Naive thymus-derived CD4-positive, alpha-beta T cell (primary cell): ENCODE measurements at regions of chr10 and their contacts with region 1.

Region 1: DNA sequence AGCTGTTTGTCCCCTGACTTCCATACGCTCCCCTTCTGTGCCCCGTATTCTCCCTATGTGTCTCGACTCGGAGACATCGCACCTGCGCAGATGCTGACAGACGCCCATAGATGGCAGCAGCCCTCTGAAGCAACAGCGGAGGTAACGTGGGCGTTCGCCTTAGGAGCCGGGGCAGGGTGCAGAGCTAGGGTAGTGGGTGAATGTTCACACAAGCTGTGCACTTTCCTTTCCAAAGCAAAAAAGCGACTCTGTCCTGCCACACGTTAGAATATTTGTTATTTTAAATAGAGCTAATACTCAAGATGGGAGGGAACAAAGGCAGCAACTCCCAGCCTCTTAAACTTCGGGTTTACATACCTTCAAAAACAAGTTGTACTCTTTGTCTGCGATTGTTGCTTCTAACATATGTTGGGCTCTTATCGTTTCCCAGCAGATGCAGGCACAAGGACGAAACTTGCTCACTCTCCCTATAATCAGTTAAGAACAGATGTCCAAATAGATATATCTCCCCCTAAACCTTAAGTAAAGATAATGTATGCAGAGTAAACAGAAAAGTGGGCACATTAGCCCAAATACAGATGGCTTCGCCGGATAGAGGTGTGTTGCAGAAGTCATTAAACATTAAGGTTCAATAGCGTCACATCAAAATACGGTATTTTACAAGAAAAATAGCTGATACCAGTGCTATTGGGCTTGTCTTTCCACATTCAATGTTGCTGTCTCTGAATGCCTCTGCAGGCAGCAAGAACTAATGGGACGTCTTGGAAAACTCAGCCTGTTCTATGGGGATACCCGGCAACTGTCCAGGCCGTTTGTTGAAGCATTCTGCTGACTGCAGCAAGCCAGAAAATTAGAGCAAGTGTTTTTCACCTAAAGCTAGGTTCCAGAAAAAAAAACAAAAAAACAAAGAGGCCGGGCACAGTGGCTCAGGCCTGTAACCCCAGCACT is 340.3 kb upstream of the PRKCQ start:
- DNase-seq: peak; percentile 47 to 74 (median 69)
- ATAC-seq: peak; percentile 97
- H3K4me3 ChIP-seq: no peak overlapping the region
- H3K4me3 Mint-ChIP-seq: peak overlapping the region in 7 of 10 donors; percentile 13 to 45 (median 26)
- H3K27ac ChIP-seq: no peak overlapping the region
- H3K27ac Mint-ChIP-seq: no peak overlapping the region
- H3K4me1 ChIP-seq: peaks cover 0 to 21% of the 10 kb centered on the region in 2 donors
- H3K4me1 Mint-ChIP-seq: peaks cover 0 to 25% (median 12%) of the 10 kb centered on the region in 7 donors
- H3K27me3 ChIP-seq: no peaks in the 10 kb centered on the region
- H3K27me3 Mint-ChIP-seq: peaks cover 0 to 14% (median 5%) of the 10 kb centered on the region in 5 donors

Region 2: DNA sequence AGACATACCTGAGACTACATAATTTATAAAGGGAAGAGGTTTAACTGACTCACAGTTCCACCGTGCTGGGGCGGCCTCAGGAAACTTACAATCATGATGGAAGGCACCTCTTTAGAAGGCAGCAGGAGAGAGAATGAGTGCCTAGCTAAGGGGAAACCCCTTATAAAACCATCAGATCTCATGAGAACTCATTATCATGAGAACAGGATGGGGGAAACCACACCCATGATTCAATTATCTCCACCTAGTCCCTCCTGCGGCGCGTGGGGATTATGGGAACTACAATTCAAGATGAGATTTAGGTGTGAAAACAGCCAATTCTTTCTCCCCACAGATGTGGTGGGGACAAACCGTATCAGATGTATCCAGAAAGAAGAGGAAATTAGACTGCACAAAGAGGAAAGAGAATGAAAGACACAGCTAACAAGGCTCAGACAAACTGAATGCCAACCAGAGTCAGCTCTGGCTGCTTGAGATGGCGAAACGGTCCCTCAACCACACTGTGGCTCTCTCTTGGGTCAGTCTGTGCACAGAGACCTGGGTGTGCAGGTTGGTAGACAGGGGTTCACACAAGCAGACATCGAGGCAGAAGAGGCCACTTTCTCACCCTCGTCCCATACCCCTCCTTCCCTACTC is 114.9 kb after region 1 on chr10:
- CTCF ChIA-PET with region 1: no interaction called
- POLR2A ChIA-PET with region 1: no interaction called
- intact Hi-C with region 1: loop called in 1 of 2 experiments (anchors 10 kb)
- DNase-seq: no peak
- ATAC-seq: peak; percentile 68
- H3K4me3 ChIP-seq: no peak overlapping the region
- H3K4me3 Mint-ChIP-seq: peak overlapping the region in 1 of 10 donors; percentile 30
- H3K27ac ChIP-seq: no peak overlapping the region
- H3K27ac Mint-ChIP-seq: peak overlapping the region in 2 of 9 donors; percentile 38 to 60
- H3K4me1 ChIP-seq: peaks cover 5 to 37% of the 10 kb centered on the region in 2 donors
- H3K4me1 Mint-ChIP-seq: peaks cover 0 to 40% (median 19%) of the 10 kb centered on the region in 7 donors
- H3K27me3 ChIP-seq: no peaks in the 10 kb centered on the region
- H3K27me3 Mint-ChIP-seq: peaks cover 0 to 2% (median 0%) of the 10 kb centered on the region in 5 donors

Region 3: GRCh38 chr10:7070950-7071349 is 150.6 kb after region 1 on chr10:
- CTCF ChIA-PET with region 1: no interaction called
- POLR2A ChIA-PET with region 1: no interaction called
- intact Hi-C with region 1: loop called in 1 of 2 experiments (anchors 5 kb)
- DNase-seq: no peak
- ATAC-seq: no peak
- H3K4me3 ChIP-seq: no peak overlapping the region
- H3K4me3 Mint-ChIP-seq: no peak overlapping the region
- H3K27ac ChIP-seq: no peak overlapping the region
- H3K27ac Mint-ChIP-seq: no peak overlapping the region
- H3K4me1 ChIP-seq: peaks cover 0 to 5% of the 10 kb centered on the region in 2 donors
- H3K4me1 Mint-ChIP-seq: peaks cover 0 to 2% (median 0%) of the 10 kb centered on the region in 7 donors
- H3K27me3 ChIP-seq: no peaks in the 10 kb centered on the region
- H3K27me3 Mint-ChIP-seq: peaks cover 5 to 30% (median 11%) of the 10 kb centered on the region in 5 donors

Region 4: DNA sequence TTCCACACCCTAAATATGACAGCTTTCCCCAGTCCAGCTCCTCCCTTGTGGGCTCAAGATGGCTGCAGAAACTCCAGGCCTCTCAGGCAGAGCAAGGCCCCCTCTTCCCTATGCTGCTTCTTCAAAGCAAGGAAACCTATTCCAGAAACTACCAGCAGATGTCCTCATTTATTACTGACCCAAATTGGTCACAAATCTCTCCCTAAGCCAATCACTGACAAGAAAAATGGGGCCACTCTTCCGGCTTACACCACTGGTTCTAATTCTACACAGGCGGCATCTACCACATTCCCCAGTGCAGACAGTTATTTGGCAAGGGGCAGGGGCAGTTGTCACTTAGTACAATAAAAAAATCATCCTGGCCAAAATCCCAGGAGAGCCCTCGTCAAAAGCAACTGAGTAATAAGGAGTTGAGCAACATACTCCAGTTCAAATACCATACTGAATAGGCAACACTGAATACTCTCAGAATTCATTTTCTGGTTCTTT is 340.1 kb after region 1 on chr10:
- CTCF ChIA-PET with region 1: interaction called, 3 read pairs
- POLR2A ChIA-PET with region 1: no interaction called
- intact Hi-C with region 1: loop called in 1 of 2 experiments (anchors 2 kb)
- DNase-seq: peak in 3 of 9 donors; percentile 16 to 33 (median 31)
- ATAC-seq: peak; percentile 73
- H3K4me3 ChIP-seq: no peak overlapping the region
- H3K4me3 Mint-ChIP-seq: peak overlapping the region in 8 of 10 donors; percentile 29 to 75 (median 61)
- H3K27ac ChIP-seq: no peak overlapping the region
- H3K27ac Mint-ChIP-seq: peak overlapping the region; percentile 51 to 94 (median 86)
- H3K4me1 ChIP-seq: peaks cover 27 to 30% of the 10 kb centered on the region in 2 donors
- H3K4me1 Mint-ChIP-seq: peaks cover 42 to 64% (median 57%) of the 10 kb centered on the region in 7 donors
- H3K27me3 ChIP-seq: no peaks in the 10 kb centered on the region
- H3K27me3 Mint-ChIP-seq: no peaks in the 10 kb centered on the region

Region 5: GRCh38 chr10:7417103-7417623 is 496.8 kb after region 1 on chr10:
- CTCF ChIA-PET with region 1: interaction called, 77 read pairs
- POLR2A ChIA-PET with region 1: no interaction called
- intact Hi-C with region 1: loop called (anchors 1 kb)
- DNase-seq: peak in 7 of 9 donors; percentile 36 to 62 (median 46)
- ATAC-seq: peak; percentile 69
- H3K4me3 ChIP-seq: no peak overlapping the region
- H3K4me3 Mint-ChIP-seq: no peak overlapping the region
- H3K27ac ChIP-seq: no peak overlapping the region
- H3K27ac Mint-ChIP-seq: peak overlapping the region in 3 of 9 donors; percentile 27 to 79 (median 29)
- H3K4me1 ChIP-seq: peaks cover 5 to 10% of the 10 kb centered on the region in 2 donors
- H3K4me1 Mint-ChIP-seq: peaks cover 8 to 35% (median 25%) of the 10 kb centered on the region in 7 donors
- H3K27me3 ChIP-seq: no peaks in the 10 kb centered on the region
- H3K27me3 Mint-ChIP-seq: peaks cover 0 to 33% (median 0%) of the 10 kb centered on the region in 5 donors